CD4-positive, alpha-beta memory T cell (primary cell): ENCODE measurements at regions of chr18 and their contacts with region 1.

Region 1: DNA sequence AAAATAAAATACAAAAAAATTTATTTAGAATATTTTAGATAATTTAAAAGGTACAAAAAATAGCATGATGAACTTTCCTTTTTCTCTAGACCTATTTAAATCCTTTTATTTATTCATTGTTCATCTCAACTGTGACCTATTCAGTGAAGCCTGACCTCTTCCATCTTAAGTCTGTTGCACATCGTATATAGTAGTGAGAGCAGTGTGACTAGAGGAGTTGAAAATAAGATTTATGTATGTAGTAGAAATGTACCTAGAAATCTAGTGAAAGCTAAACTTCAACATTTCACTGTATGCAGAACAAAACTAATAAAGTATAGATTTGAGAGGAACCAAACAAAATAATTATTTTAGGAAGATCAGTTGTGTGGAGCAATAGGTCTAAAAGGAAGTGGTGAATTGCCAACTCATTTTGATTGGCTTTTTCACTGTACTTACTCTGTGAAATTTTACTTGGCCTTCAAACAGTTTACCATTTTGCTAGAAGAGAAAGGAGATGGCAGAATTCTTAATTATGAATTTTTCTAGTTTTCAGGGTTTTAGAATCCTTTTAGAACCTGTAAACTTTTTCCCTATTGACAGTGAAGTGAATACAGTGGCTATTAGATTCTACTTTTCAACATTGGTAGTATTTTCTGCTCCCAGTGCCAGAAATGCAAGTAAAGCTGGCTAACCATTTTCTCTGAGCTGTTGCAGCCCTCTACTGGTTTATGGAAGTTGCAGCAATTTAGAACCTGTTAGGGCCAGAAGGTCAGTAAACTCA is 11.0 kb downstream of the ANKRD12 start:
- DNase-seq: peak; percentile 55 to 67 (median 61)
- H3K4me3 ChIP-seq: no peak overlapping the region
- H3K4me3 Mint-ChIP-seq: peak overlapping the region in 6 of 8 donors; percentile 33 to 82 (median 67)
- H3K27ac ChIP-seq: peak overlapping the region; percentile 34
- H3K27ac Mint-ChIP-seq: peak overlapping the region; percentile 66 to 96 (median 76)
- H3K4me1 ChIP-seq: peaks cover 92% of the 10 kb centered on the region
- H3K4me1 Mint-ChIP-seq: peaks cover 55 to 87% (median 67%) of the 10 kb centered on the region in 4 donors
- H3K27me3 ChIP-seq: no peaks in the 10 kb centered on the region
- H3K27me3 Mint-ChIP-seq: no peaks in the 10 kb centered on the region

Region 2: GRCh38 chr18:9082711-9083510 is 64.7 kb before region 1 on chr18:
- CTCF ChIA-PET with region 1: interaction called, 61 read pairs
- POLR2A ChIA-PET with region 1: interaction called, 238 read pairs
- intact Hi-C with region 1: no loop called
- DNase-seq: peak; percentile 53 to 81 (median 66)
- H3K4me3 ChIP-seq: peak overlapping the region in 1 of 2 donors; percentile 25
- H3K4me3 Mint-ChIP-seq: peak overlapping the region; percentile 43 to 84 (median 68)
- H3K27ac ChIP-seq: peak overlapping the region; percentile 58
- H3K27ac Mint-ChIP-seq: peak overlapping the region; percentile 92 to 97 (median 95)
- H3K4me1 ChIP-seq: peaks cover 54% of the 10 kb centered on the region
- H3K4me1 Mint-ChIP-seq: peaks cover 27 to 50% (median 40%) of the 10 kb centered on the region in 4 donors
- H3K27me3 ChIP-seq: no peaks in the 10 kb centered on the region
- H3K27me3 Mint-ChIP-seq: no peaks in the 10 kb centered on the region

Region 3: DNA sequence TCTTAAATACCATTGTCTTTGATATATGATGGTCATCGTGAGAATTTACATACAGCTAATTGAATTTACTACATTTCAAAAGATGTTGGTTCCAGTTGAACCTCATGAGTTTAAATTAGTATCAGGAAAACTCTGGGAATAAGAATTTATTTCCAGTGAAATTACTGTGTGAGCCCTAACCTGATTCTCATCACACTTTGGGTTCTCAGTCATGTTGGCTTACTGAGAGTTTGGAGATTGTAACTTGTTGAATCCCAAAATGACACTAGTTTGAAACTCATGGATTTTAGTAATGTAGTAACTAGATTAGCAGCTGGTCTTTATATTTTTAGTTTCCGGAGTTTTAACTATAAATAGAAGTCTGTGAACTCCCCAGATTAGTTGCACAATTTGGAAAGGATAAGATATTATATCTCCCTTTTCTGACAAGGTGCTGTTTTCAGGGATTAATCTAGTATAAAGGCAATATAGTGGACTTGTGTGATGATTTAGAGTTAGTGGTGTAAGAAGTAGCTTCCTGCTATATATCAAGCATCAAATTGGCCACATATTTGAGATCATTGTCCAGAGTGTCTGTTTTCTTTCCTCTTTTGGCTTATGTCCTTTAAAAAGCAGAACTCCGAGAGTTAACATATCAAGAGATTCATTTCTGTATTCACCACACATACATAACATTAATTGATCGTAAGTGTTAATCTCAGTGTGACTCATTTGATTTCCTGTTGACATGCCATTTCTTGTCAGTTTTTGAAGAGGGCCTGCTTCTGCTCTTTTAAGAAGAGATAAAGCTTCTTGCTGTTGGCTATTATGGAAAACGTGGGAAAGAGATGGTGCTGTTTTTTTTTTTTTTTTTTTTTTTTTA is 29.4 kb before region 1 on chr18:
- CTCF ChIA-PET with region 1: interaction called, 3 read pairs
- POLR2A ChIA-PET with region 1: interaction called, 823 read pairs
- intact Hi-C with region 1: no loop called
- DNase-seq: peak in 4 of 5 donors; percentile 47 to 54 (median 52)
- H3K4me3 ChIP-seq: peak overlapping the region; percentile 8 to 28
- H3K4me3 Mint-ChIP-seq: peak overlapping the region; percentile 62 to 91 (median 84)
- H3K27ac ChIP-seq: peak overlapping the region; percentile 80
- H3K27ac Mint-ChIP-seq: peak overlapping the region; percentile 96 to 100 (median 98)
- H3K4me1 ChIP-seq: peaks cover 98% of the 10 kb centered on the region
- H3K4me1 Mint-ChIP-seq: peaks cover 51 to 86% (median 69%) of the 10 kb centered on the region in 4 donors
- H3K27me3 ChIP-seq: no peaks in the 10 kb centered on the region
- H3K27me3 Mint-ChIP-seq: no peaks in the 10 kb centered on the region

Region 4: DNA sequence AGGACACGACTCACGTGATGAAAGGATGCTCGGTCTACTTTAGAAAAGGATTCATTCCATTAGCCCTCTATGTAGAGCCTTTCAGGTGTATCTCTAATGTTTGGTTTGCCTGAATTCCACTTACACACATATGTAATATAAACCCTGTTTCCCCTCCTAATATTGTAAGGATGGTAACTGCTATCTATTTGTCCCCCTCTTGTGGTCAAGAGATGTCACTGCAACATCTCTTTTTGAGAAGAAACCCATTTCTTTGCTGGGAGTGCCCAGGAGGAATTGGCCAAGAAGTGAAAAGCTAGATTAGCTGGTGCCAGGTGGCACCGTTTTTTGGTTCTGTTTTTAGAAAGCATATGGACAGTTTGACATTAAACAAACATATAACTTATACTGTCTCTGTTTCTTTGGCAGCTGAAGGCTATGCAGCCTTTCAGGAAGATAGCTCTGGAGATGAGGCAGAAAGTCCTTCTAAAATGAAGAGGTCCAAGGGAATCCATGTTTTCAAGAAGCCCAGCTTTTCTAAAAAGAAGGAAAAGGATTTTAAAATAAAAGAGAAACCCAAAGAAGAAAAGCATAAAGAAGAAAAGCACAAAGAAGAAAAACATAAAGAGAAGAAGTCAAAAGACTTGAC is 368.9 kb after region 1 on chr18:
- CTCF ChIA-PET with region 1: interaction called, 7 read pairs
- POLR2A ChIA-PET with region 1: no interaction called
- intact Hi-C with region 1: loop called (anchors 5 kb)
- DNase-seq: peak in 4 of 5 donors; percentile 35 to 50 (median 46)
- H3K4me3 ChIP-seq: no peak overlapping the region
- H3K4me3 Mint-ChIP-seq: no peak overlapping the region
- H3K27ac ChIP-seq: no peak overlapping the region
- H3K27ac Mint-ChIP-seq: peak overlapping the region in 3 of 7 donors; percentile 14 to 61 (median 30)
- H3K4me1 ChIP-seq: no peaks in the 10 kb centered on the region
- H3K4me1 Mint-ChIP-seq: peaks cover 0 to 12% (median 5%) of the 10 kb centered on the region in 4 donors
- H3K27me3 ChIP-seq: no peaks in the 10 kb centered on the region
- H3K27me3 Mint-ChIP-seq: no peaks in the 10 kb centered on the region

Region 5: DNA sequence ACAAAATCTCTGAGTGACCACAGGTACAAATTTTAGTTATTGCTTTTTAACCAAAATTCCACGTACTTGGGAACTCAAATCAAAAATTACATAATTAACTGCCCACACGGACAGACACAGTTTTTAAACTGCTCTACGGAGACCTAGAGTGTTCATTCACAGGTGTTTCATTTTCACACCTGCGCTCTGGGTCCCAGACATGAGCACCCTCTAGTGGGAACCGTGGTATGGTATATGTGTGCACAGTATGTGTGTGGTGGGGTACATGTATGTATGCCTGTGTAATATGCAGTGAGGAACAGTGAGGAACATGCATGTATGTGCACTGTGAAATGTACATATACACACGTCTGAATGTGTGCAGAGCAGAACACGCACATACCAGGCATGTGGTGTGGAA is 401.8 kb after region 1 on chr18:
- CTCF ChIA-PET with region 1: no interaction called
- POLR2A ChIA-PET with region 1: no interaction called
- intact Hi-C with region 1: no loop called
- DNase-seq: no peak
- H3K4me3 ChIP-seq: no peak overlapping the region
- H3K4me3 Mint-ChIP-seq: no peak overlapping the region
- H3K27ac ChIP-seq: no peak overlapping the region
- H3K27ac Mint-ChIP-seq: peak overlapping the region in 2 of 7 donors; percentile 16 to 82
- H3K4me1 ChIP-seq: no peaks in the 10 kb centered on the region
- H3K4me1 Mint-ChIP-seq: no peaks in the 10 kb centered on the region
- H3K27me3 ChIP-seq: no peaks in the 10 kb centered on the region
- H3K27me3 Mint-ChIP-seq: no peaks in the 10 kb centered on the region